Body of pancreas (tissue), 4 donors: ENCODE measurements at regions of chr4 and their contacts with region 1.

Region 1: GRCh38 chr4:41281038-41281634 is 24.4 kb downstream of the UCHL1 start:
- DNase-seq: peak; percentile 34 to 72 (median 42)
- ATAC-seq: peak; percentile 91
- H3K4me3 ChIP-seq: no peak overlapping the region
- H3K27ac ChIP-seq: no peak overlapping the region
- H3K4me1 ChIP-seq: no peaks in the 10 kb centered on the region
- H3K27me3 ChIP-seq: no peaks in the 10 kb centered on the region
- CTCF ChIP-seq: peak; percentile 42 to 95 (median 94)
- POLR2A ChIP-seq: no peak

Region 2: GRCh38 chr4:41661442-41662076 is 380.4 kb after region 1 on chr4:
- intact Hi-C with region 1: loop called (anchors 5 kb)
- DNase-seq: peak; percentile 60 to 74 (median 64)
- ATAC-seq: peak; percentile 77
- H3K4me3 ChIP-seq: no peak overlapping the region
- H3K27ac ChIP-seq: no peak overlapping the region
- H3K4me1 ChIP-seq: no peaks in the 10 kb centered on the region
- H3K27me3 ChIP-seq: no peaks in the 10 kb centered on the region
- CTCF ChIP-seq: peak; percentile 76 to 97 (median 82)
- POLR2A ChIP-seq: no peak

Region 3: DNA sequence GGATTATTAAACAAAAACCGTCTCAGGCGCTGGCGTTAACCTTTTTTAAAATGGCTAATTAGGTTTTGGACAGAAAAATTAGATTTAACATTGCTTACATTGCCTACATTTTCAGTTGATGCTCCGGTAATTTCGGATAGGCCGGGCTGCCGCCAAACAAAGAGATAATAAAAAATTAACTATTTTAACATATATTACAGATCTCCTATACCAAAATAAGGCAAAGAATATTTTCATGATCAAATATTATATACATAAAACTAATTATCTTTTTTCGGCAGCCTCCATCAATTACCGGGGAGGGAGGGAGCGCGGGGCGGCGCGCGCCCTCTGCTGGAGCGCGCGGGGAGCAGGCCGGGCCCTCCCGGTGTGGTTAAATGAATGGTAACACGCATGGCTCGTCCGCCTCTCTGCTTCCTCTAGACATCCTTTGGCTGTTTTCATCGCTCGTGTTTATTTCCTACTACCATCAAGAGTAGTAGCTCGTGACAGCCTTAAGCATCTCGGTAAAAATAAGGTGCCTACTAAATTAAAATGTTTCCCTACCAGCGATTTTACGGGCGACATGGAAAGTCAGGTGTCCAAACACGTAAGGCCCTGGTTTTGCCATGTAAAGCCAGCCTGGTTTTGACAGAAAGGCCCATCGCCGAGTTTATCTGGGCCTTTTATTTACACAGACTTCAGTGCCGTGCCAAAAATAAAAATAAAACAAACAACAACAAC is 601.6 kb after region 1 on chr4:
- intact Hi-C with region 1: loop called (anchors 10 kb)
- DNase-seq: peak in 3 of 4 donors; percentile 21 to 54 (median 46)
- ATAC-seq: peak; percentile 70
- H3K4me3 ChIP-seq: no peak overlapping the region
- H3K27ac ChIP-seq: no peak overlapping the region
- H3K4me1 ChIP-seq: peaks cover 26% of the 10 kb centered on the region
- H3K27me3 ChIP-seq: peaks cover 0 to 16% of the 10 kb centered on the region in 2 donors
- CTCF ChIP-seq: peak; percentile 69 to 99 (median 72)
- POLR2A ChIP-seq: no peak